MCF 10A (cell line): ENCODE measurements at regions of chr7 and their contacts with region 1.

Region 1: DNA sequence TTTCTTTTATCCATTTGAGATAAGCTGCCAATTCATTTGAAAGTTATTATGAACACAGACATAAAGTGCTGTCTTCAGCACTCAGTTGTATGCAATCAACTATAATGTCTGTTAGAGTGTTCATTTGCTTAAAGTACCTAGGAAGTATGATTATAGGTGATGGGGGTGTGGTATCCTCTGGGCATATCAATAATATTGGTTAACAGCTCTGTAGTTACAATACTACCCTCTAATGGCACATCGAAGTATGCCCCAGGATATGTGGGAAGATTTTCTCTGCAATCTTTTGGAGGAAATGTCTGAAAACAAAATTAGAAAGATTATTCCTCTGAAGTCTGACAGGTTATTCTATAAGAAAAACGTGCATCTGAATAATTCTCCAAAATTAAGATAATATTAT is 429.7 kb downstream of the ARL4A start:
- DNase-seq: peak; percentile 18
- H3K4me3 Mint-ChIP-seq: no peak overlapping the region
- H3K27ac Mint-ChIP-seq: no peak overlapping the region
- H3K4me1 Mint-ChIP-seq: peaks cover 19% of the 10 kb centered on the region
- H3K27me3 Mint-ChIP-seq: no peaks in the 10 kb centered on the region
- CTCF ChIP-seq: peak; percentile 76

Region 2: DNA sequence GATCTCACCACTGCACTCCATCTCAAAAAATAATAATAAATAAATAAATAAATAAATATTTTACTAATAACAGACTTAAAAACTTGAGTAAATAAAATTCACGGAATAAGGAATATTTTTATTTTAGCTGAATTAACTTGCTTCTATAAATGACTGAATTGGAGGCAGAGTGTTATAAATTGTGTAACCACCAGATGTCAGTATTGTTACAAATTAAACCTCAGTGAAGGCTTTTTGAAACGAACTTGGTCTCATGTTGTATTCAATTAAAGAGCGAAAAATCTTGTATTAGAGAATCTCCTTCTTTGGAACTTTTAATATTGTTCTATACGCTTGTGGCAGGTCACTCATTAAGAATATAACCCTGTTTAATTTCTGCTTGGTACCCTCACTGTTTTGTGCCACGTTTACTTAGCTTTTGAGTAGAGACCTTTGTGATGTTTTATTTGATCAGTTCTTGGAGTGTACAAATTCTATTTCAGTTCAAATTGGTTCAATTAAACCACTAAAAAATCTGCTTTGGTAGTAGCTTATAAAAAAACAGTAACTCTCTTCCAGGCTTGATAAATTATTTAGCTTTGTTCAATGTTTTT is 592.2 kb before region 1 on chr7:
- CTCF ChIA-PET with region 1: interaction called, 4 read pairs
- POLR2A ChIA-PET with region 1: no interaction called
- intact Hi-C with region 1: loop called (anchors 5 kb)
- DNase-seq: peak; percentile 56
- H3K4me3 Mint-ChIP-seq: no peak overlapping the region
- H3K27ac Mint-ChIP-seq: no peak overlapping the region
- H3K4me1 Mint-ChIP-seq: no peaks in the 10 kb centered on the region
- H3K27me3 Mint-ChIP-seq: peaks cover 35% of the 10 kb centered on the region
- CTCF ChIP-seq: peak; percentile 56

Region 3: GRCh38 chr7:12638851-12639467 is 478.1 kb before region 1 on chr7:
- CTCF ChIA-PET with region 1: interaction called, 6 read pairs
- POLR2A ChIA-PET with region 1: no interaction called
- intact Hi-C with region 1: loop called (anchors 1 kb)
- DNase-seq: peak; percentile 50
- H3K4me3 Mint-ChIP-seq: no peak overlapping the region
- H3K27ac Mint-ChIP-seq: no peak overlapping the region
- H3K4me1 Mint-ChIP-seq: no peaks in the 10 kb centered on the region
- H3K27me3 Mint-ChIP-seq: no peaks in the 10 kb centered on the region
- CTCF ChIP-seq: peak; percentile 50

Region 4: DNA sequence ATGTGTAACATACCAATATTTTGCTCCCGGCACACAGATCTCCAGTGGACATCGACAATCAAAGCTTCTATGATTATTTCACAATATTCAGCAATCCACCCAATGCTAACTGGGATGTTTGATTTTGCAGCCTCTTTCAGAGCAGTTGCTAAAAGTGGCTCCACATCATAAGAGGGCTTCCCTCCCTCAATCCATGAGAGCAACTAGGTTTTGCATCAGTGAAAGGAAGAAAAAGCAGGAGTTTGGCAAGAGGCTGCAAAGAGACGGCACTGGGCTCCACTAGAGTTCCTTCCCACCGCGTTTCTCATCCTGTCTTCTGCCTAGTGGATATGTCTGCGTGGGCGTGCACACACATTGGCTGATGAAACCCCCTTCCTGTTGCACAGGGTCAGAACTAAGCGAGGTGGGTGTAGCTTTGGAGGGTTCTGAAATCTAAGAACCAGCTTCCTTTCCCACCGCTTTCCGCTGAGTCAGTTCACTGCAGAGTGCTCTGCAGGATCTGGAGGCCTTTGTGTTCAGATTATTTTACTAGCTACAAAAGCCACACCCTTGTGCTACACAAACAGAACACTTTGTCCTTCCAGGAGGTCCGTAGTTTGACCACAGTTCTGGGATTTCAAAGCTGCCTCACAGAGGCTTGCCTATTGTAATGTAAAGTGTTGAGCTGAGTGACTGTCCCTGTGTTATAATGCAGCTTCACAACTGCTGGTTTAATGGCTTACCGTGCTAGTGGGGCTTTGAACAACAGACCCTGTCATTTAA is 401.6 kb before region 1 on chr7:
- CTCF ChIA-PET with region 1: interaction called, 5 read pairs
- POLR2A ChIA-PET with region 1: interaction called, 3 read pairs
- intact Hi-C with region 1: loop called (anchors 10 kb)
- DNase-seq: peak; percentile 98
- H3K4me3 Mint-ChIP-seq: peak overlapping the region; percentile 76
- H3K27ac Mint-ChIP-seq: peak overlapping the region; percentile 92
- H3K4me1 Mint-ChIP-seq: peaks cover 53% of the 10 kb centered on the region
- H3K27me3 Mint-ChIP-seq: no peaks in the 10 kb centered on the region
- CTCF ChIP-seq: no peak

Region 5: DNA sequence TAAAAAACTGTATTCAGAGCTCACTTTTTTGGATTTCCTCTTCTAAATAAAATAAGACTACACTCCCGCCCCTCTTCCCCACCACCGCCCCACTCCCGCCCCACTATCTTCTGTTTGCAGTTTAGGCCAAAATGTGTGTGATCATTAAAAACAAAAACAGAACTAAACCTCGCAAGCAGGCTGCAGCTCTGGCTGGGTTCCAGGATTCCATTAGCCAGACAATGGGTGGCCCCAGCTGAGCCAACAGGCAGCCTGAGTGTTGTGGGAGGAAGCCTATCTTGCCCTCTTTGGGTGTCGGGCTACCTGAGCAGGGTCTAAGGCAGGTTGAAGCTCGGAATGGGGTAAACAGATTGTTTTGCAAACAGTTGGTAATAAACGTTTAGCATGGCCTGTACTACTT is 388.0 kb before region 1 on chr7:
- CTCF ChIA-PET with region 1: interaction called, 5 read pairs
- POLR2A ChIA-PET with region 1: no interaction called
- intact Hi-C with region 1: loop called (anchors 1 kb)
- DNase-seq: peak; percentile 73
- H3K4me3 Mint-ChIP-seq: peak overlapping the region; percentile 38
- H3K27ac Mint-ChIP-seq: peak overlapping the region; percentile 40
- H3K4me1 Mint-ChIP-seq: peaks cover 30% of the 10 kb centered on the region
- H3K27me3 Mint-ChIP-seq: no peaks in the 10 kb centered on the region
- CTCF ChIP-seq: no peak

Region 6: DNA sequence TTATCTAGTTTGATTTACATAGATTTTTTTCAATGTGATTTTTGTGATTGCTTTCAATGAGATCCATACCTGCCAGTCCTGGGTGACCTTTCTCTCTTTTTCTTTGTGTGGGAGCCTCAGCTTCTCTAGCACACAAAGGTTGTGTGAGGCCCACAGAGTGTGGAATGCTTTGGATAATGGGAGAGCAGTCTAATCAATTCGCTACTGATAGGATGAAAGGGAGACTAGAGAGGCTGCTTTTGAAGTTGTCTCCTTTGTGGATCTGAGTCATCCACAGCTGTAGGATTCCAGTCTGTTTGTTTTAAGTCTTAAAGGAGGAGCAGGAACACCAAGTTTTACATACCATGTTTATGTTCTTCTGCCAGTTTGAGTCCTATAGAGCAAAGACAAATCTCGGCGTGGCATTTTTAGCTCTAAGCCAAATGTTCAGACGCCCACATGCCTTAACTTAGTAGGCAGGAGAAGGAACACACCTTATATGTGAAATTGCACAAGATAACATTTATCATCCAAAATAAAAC is 99.7 kb before region 1 on chr7:
- CTCF ChIA-PET with region 1: interaction called, 4 read pairs
- POLR2A ChIA-PET with region 1: interaction called, 10 read pairs
- intact Hi-C with region 1: no loop called
- DNase-seq: peak; percentile 83
- H3K4me3 Mint-ChIP-seq: peak overlapping the region; percentile 44
- H3K27ac Mint-ChIP-seq: peak overlapping the region; percentile 65
- H3K4me1 Mint-ChIP-seq: peaks cover 8% of the 10 kb centered on the region
- H3K27me3 Mint-ChIP-seq: no peaks in the 10 kb centered on the region
- CTCF ChIP-seq: no peak

Region 7: GRCh38 chr7:13262929-13263530 is 145.9 kb after region 1 on chr7:
- CTCF ChIA-PET with region 1: interaction called, 4 read pairs
- POLR2A ChIA-PET with region 1: no interaction called
- intact Hi-C with region 1: loop called (anchors 5 kb)
- DNase-seq: peak; percentile 57
- H3K4me3 Mint-ChIP-seq: no peak overlapping the region
- H3K27ac Mint-ChIP-seq: no peak overlapping the region
- H3K4me1 Mint-ChIP-seq: no peaks in the 10 kb centered on the region
- H3K27me3 Mint-ChIP-seq: no peaks in the 10 kb centered on the region
- CTCF ChIP-seq: peak; percentile 59